K562 (cell line): ENCODE measurements at regions of chr17 and their contacts with region 1.

Region 1: GRCh38 chr17:77619851-77620250 is 338.7 kb upstream of the TNRC6C start:
- DNase-seq: no peak
- ATAC-seq: no peak
- H3K4me3 ChIP-seq: no peak overlapping the region
- H3K27ac ChIP-seq: no peak overlapping the region
- H3K4me1 ChIP-seq: no peaks in the 10 kb centered on the region; a peak in 2 of 5 replicates
- H3K27me3 ChIP-seq: peaks cover 7 to 29% of the 10 kb centered on the region in 2 experiments
- CTCF ChIP-seq: no peak
- EP300 ChIP-seq: no peak
- POLR2A ChIP-seq: no peak
- RAD21 ChIP-seq: no peak

Region 2: GRCh38 chr17:76940738-76941350 is 679.0 kb before region 1 on chr17:
- CTCF ChIA-PET with region 1: no interaction called
- POLR2A ChIA-PET with region 1: no interaction called
- in situ Hi-C with region 1: no loop called
- intact Hi-C with region 1: no loop called
- DNase-seq: peak in 1 of 4 experiments; percentile 34
- ATAC-seq: peak; percentile 41; the same call in 1 of the 3 replicates
- H3K4me3 ChIP-seq: no peak overlapping the region
- H3K27ac ChIP-seq: no peak overlapping the region
- H3K4me1 ChIP-seq: peaks cover 0 to 3% of the 10 kb centered on the region in 2 experiments; a peak in 1 of 5 replicates
- H3K27me3 ChIP-seq: peaks cover 18 to 60% of the 10 kb centered on the region in 2 experiments; a peak in 4 of 5 replicates
- CTCF ChIP-seq: peak; percentile 21 to 38 (median 35); a peak in 3 of 6 replicates
- EP300 ChIP-seq: no peak
- POLR2A ChIP-seq: no peak
- RAD21 ChIP-seq: peak in 1 of 2 experiments; percentile 13; a peak in 1 of 4 replicates

Region 3: DNA sequence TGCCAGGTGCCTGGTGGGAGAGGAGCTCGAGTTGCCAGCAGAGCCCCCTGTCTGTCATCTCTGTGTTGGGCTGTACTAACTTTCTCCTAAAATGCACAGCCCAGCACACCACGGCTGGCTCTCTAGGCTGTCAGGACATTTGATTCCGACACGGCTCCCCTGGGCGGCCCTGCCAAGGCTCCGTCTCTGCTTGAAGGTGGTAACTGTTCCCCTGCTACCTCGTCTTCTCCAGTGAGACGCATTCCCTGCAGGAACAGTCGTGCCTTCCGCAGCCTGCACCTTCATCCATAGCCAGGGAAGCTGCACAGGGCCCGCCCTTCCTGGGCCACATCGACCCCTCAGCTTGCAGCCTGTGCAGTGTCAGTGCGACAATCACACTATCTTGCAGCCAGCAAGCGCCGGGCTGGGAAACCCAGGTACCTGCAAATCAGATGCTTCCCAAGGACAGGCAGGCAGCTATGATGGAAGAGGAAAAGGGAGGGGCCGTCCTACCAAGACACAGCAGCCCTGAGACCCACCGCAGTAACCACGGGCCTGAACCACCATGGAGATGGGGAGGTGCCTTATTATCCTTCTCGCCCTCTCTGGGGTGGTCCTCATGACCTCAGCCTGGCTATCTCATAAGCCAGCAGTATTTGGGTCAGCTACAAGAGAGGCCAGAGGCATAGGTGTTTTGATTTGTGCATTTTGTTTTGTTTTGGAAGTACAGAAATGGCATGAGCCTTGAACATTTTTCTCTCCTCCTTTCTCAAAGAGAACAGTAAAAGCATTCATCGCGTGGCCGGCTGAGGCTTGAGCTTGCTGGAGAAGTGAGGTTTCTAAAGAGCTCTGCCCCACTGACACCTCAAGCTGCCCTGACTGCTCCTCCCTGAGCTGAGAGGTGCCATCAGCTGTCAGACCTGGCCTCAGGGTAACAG is 23.1 kb before region 1 on chr17:
- CTCF ChIA-PET with region 1: no interaction called
- POLR2A ChIA-PET with region 1: interaction called, 10 read pairs
- in situ Hi-C with region 1: no loop called
- intact Hi-C with region 1: no loop called
- DNase-seq: no peak
- ATAC-seq: no peak
- H3K4me3 ChIP-seq: no peak overlapping the region
- H3K27ac ChIP-seq: no peak overlapping the region
- H3K4me1 ChIP-seq: no peaks in the 10 kb centered on the region
- H3K27me3 ChIP-seq: peaks cover 54 to 80% of the 10 kb centered on the region in 2 experiments
- CTCF ChIP-seq: no peak
- EP300 ChIP-seq: no peak
- POLR2A ChIP-seq: no peak
- RAD21 ChIP-seq: no peak

Region 4: DNA sequence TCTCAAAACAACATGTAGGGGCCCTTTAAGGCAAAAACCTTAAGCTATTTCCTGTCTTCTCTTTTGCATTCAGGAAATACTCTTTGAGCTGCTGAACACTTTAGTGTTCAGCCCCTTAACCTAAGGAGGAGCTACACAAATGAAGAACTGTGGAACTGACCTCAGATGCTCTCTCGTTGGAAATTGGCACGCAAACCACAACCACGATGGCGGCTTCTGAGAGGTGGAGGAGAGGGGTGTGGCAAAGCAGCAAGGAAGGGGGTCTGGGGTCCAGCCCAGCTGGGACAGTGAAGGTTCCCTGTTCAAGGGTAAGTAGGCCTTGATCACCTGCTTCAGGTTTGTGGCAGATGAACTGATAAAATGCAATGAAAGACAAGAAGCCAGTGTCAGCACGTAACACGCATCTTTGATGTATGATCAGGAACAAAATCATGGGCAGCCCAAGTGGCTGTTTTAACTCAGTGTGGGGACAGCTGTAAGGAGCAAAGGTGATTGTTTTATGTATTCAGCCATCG is 47.1 kb after region 1 on chr17:
- CTCF ChIA-PET with region 1: no interaction called
- POLR2A ChIA-PET with region 1: no interaction called
- in situ Hi-C with region 1: no loop called
- intact Hi-C with region 1: no loop called
- DNase-seq: no peak
- ATAC-seq: no peak
- H3K4me3 ChIP-seq: no peak overlapping the region
- H3K27ac ChIP-seq: no peak overlapping the region
- H3K4me1 ChIP-seq: no peaks in the 10 kb centered on the region
- H3K27me3 ChIP-seq: peaks cover 0 to 5% of the 10 kb centered on the region in 2 experiments; a peak in 1 of 5 replicates
- CTCF ChIP-seq: no peak
- EP300 ChIP-seq: no peak
- POLR2A ChIP-seq: no peak
- RAD21 ChIP-seq: no peak

Region 5: GRCh38 chr17:78046923-78047322 is 427.1 kb after region 1 on chr17:
- CTCF ChIA-PET with region 1: no interaction called
- POLR2A ChIA-PET with region 1: no interaction called
- in situ Hi-C with region 1: no loop called
- intact Hi-C with region 1: no loop called
- DNase-seq: peak in 1 of 4 experiments; percentile 27
- ATAC-seq: no peak
- H3K4me3 ChIP-seq: no peak overlapping the region
- H3K27ac ChIP-seq: no peak overlapping the region; the same call in 2 of the 3 replicates
- H3K4me1 ChIP-seq: peaks cover 24 to 35% of the 10 kb centered on the region in 2 experiments; a peak in 4 of 5 replicates
- H3K27me3 ChIP-seq: no peaks in the 10 kb centered on the region
- CTCF ChIP-seq: no peak
- EP300 ChIP-seq: no peak
- POLR2A ChIP-seq: no peak
- RAD21 ChIP-seq: no peak